Dendritic cell treated with granulocyte-macrophage colony-stimulating factor and Interleukin-4, amounts not matched to agents 40 ng/mL and 50 ng/mL, for 4 days (primary cell): ENCODE measurements at regions of chr2 and their contacts with region 1.

Region 1: GRCh38 chr2:9799665-9800632 is 43.3 kb upstream of the TAF1B start:
- H3K4me3 Mint-ChIP-seq: peak overlapping the region; percentile 60
- H3K27ac Mint-ChIP-seq: peak overlapping the region; percentile 88
- H3K4me1 Mint-ChIP-seq: peaks cover 63% of the 10 kb centered on the region
- H3K27me3 Mint-ChIP-seq: peaks cover 2% of the 10 kb centered on the region

Region 2: GRCh38 chr2:9152975-9153642 is 646.8 kb before region 1 on chr2:
- intact Hi-C with region 1: no loop called
- H3K4me3 Mint-ChIP-seq: no peak overlapping the region
- H3K27ac Mint-ChIP-seq: no peak overlapping the region
- H3K4me1 Mint-ChIP-seq: peaks cover 16% of the 10 kb centered on the region
- H3K27me3 Mint-ChIP-seq: peaks cover 29% of the 10 kb centered on the region

Region 3: GRCh38 chr2:9282128-9283112 is 517.5 kb before region 1 on chr2:
- intact Hi-C with region 1: no loop called
- H3K4me3 Mint-ChIP-seq: no peak overlapping the region
- H3K27ac Mint-ChIP-seq: no peak overlapping the region
- H3K4me1 Mint-ChIP-seq: peaks cover 30% of the 10 kb centered on the region
- H3K27me3 Mint-ChIP-seq: peaks cover 2% of the 10 kb centered on the region

Region 4: GRCh38 chr2:9843229-9844035 is 43.5 kb after region 1 on chr2 and contains the start of gene TAF1B:
- intact Hi-C with region 1: loop called (anchors 2 kb)
- H3K4me3 Mint-ChIP-seq: peak within 1 kb of the TSS; percentile 81
- H3K27ac Mint-ChIP-seq: peak within 1 kb of the TSS; percentile 87
- H3K4me1 Mint-ChIP-seq: peaks cover 42% of the 10 kb centered on the region
- H3K27me3 Mint-ChIP-seq: no peaks in the 10 kb centered on the region